Naive thymus-derived CD4-positive, alpha-beta T cell (primary cell): ENCODE measurements at regions of chr22 and their contacts with region 1.

Region 1: GRCh38 chr22:30224161-30224857 is 22.2 kb downstream of the LIF start:
- DNase-seq: no peak
- ATAC-seq: no peak
- H3K4me3 ChIP-seq: no peak overlapping the region
- H3K4me3 Mint-ChIP-seq: no peak overlapping the region
- H3K27ac ChIP-seq: no peak overlapping the region
- H3K27ac Mint-ChIP-seq: peak overlapping the region in 6 of 9 donors; percentile 27 to 97 (median 38)
- H3K4me1 ChIP-seq: peaks cover 34 to 35% of the 10 kb centered on the region in 2 donors
- H3K4me1 Mint-ChIP-seq: peaks cover 50 to 92% (median 70%) of the 10 kb centered on the region in 7 donors
- H3K27me3 ChIP-seq: no peaks in the 10 kb centered on the region
- H3K27me3 Mint-ChIP-seq: no peaks in the 10 kb centered on the region

Region 2: DNA sequence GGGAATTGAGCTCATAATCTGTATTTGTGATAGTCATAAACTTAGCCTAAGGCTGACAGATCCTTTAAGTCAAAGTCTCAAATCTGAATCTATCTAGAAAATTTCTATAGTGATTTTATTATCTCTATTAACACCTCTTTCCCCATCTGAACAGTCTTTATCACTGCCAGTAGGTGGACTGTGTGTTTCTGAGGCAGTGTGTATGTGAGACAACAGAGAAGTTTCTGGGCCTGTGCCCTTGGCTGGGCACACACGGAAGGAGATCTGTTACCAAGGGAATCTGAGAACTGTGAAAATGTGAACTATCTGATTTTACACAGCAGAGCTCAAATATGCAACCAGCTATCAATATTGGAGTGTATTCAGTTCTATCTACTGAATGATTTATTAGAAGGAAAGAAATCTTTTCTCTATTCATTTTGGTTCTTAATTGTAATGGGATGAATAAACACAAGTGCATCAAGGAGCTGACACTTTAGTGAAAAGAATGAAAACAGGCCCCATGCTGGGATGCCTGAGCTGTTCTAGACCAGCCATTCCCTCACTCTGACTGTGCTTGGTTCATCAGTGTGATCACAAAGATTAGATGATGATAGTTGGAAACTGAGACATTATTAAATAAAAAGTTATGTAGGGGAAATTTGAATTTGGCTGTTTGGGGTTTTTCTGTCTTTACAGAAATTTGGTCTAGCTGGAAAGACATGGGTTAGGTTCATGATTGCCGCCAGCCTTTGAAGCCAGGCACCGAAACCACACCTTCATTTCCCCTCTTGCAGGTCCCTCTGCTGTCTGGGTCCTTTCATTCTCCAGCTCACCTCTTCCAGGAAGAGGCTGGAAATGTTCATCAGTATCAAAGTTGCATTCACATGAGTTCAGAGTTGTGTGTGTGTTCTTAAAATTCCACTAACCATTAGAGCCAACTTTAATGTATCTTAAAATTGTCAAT is 45.9 kb before region 1 on chr22:
- CTCF ChIA-PET with region 1: no interaction called
- POLR2A ChIA-PET with region 1: no interaction called
- intact Hi-C with region 1: loop called in 1 of 2 experiments (anchors 10 kb)
- DNase-seq: peak in 5 of 9 donors; percentile 15 to 29 (median 23)
- ATAC-seq: peak; percentile 61
- H3K4me3 ChIP-seq: no peak overlapping the region
- H3K4me3 Mint-ChIP-seq: peak overlapping the region in 7 of 10 donors; percentile 25 to 67 (median 34)
- H3K27ac ChIP-seq: no peak overlapping the region
- H3K27ac Mint-ChIP-seq: peak overlapping the region in 6 of 9 donors; percentile 22 to 88 (median 54)
- H3K4me1 ChIP-seq: peaks cover 0 to 18% of the 10 kb centered on the region in 2 donors
- H3K4me1 Mint-ChIP-seq: peaks cover 5 to 85% (median 21%) of the 10 kb centered on the region in 7 donors
- H3K27me3 ChIP-seq: no peaks in the 10 kb centered on the region
- H3K27me3 Mint-ChIP-seq: no peaks in the 10 kb centered on the region

Region 3: GRCh38 chr22:30196141-30196879 is 28.0 kb before region 1 on chr22:
- CTCF ChIA-PET with region 1: no interaction called
- POLR2A ChIA-PET with region 1: no interaction called
- intact Hi-C with region 1: loop called in 1 of 2 experiments (anchors 2 kb)
- DNase-seq: peak in 7 of 9 donors; percentile 5 to 54 (median 18)
- ATAC-seq: peak; percentile 92
- H3K4me3 ChIP-seq: no peak overlapping the region
- H3K4me3 Mint-ChIP-seq: peak overlapping the region in 9 of 10 donors; percentile 5 to 73 (median 59)
- H3K27ac ChIP-seq: no peak overlapping the region
- H3K27ac Mint-ChIP-seq: peak overlapping the region in 5 of 9 donors; percentile 2 to 95 (median 48)
- H3K4me1 ChIP-seq: peaks cover 9 to 13% of the 10 kb centered on the region in 2 donors
- H3K4me1 Mint-ChIP-seq: peaks cover 7 to 78% (median 38%) of the 10 kb centered on the region in 7 donors
- H3K27me3 ChIP-seq: no peaks in the 10 kb centered on the region
- H3K27me3 Mint-ChIP-seq: no peaks in the 10 kb centered on the region

Region 4: DNA sequence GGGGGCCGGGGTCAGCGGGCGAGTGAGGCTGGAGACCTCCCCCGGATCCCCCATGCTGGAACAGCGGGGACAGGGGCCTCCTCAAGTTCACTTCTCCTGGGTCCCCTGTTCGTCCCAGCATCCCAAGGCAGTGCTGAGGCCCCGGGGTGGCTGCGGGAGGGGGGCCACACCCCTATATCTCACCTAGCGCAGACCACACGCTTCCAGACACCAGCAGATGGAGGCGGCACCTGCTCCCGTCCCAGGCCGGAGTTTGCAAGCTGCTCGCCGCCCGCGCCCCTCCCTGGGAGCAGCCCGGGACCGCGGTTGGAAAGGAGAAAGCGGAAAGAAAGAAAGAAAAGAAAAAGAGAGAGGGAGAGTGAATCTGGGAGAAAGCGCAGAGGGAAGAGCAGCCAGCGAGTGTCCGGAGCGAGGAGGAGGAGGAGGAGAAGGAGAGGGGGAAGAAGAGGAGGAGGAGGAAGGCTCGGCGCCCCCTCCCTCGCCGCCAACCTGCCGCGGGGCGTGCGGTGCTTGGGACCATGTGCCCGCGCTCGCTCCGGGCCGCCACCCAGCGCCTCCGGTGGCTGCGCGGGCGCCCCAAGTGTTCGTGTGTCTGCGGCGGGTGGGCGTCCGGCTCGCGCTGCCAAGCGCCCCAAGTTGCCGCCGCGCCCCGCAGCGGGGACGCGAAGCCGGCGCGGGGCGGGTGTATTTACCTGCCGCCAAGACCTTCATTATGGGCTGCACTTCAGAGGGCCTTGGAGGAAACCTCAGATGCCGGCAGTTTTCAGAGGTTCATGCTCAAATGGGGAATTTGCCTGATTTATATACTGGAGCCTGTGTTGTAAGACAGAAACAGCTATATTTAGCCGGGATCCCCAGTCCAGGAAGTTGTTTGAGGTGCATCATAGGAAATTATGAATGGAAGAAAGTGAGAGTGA is 21.9 kb after region 1 on chr22 and contains the start of gene LIF:
- CTCF ChIA-PET with region 1: no interaction called
- POLR2A ChIA-PET with region 1: no interaction called
- intact Hi-C with region 1: loop called in 1 of 2 experiments (anchors 2 kb)
- DNase-seq: peak; percentile 30 to 77 (median 50)
- ATAC-seq: peak; percentile 85
- H3K4me3 ChIP-seq: peak within 1 kb of the TSS; percentile 58
- H3K4me3 Mint-ChIP-seq: peak within 1 kb of the TSS; percentile 77 to 97 (median 86)
- H3K27ac ChIP-seq: peak within 1 kb of the TSS; percentile 22
- H3K27ac Mint-ChIP-seq: peak within 1 kb of the TSS in 4 of 9 donors; percentile 30 to 99 (median 52)
- H3K4me1 ChIP-seq: peaks cover 0 to 18% of the 10 kb centered on the region in 2 donors
- H3K4me1 Mint-ChIP-seq: peaks cover 6 to 67% (median 26%) of the 10 kb centered on the region in 7 donors
- H3K27me3 ChIP-seq: no peaks in the 10 kb centered on the region
- H3K27me3 Mint-ChIP-seq: peaks cover 0 to 37% (median 6%) of the 10 kb centered on the region in 5 donors
- total RNA-seq, gene LIF: 0.64 to 260 (median 0.98) TPM in 3 of 5 experiments, not detected in the others